SK-N-SH (cell line): ENCODE measurements at regions of chrX and their contacts with region 1.

Region 1: DNA sequence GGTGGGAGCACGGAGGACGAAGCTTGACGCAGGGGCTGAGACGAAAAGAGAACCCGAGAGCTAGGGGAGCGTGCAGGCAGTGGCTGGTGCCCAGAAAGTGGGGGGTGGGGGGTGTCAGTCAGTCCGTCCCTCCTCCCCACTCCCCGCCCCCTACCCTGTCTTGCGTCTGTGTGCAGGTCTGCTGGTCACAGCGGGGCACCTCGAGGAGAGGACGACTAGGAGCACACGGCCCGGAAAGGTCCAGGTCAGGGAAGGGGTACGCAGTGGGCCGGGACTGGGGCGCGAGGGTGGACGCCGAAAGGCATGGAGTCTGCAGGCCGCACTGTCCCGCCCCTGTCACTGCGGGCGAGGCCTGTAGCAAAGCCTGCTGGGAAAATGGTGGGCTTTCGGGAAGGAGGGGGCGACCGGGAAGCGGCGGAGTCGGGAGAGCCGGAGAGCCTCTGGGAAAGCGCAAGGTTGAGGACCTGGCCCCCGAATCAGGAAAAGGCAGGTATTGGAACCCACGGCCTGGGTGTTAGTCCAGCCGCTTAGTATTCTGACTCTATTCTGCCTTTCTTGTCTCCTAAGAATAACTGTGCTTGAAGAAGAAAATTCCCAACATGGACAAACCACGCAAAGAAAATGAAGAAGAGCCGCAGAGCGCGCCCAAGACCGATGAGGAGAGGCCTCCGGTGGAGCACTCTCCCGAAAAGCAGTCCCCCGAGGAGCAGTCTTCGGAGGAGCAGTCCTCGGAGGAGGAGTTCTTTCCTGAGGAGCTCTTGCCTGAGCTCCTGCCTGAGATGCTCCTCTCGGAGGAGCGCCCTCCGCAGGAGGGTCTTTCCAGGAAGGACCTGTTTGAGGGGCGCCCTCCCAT is 769 bp downstream of the TCEAL1 start:
- DNase-seq: peak; percentile 70
- H3K4me3 ChIP-seq: peak overlapping the region; percentile 62 to 67
- H3K27ac ChIP-seq: peak overlapping the region; percentile 86 to 92
- H3K4me1 ChIP-seq: peaks cover 3 to 4% of the 10 kb centered on the region in 2 experiments; a peak in 3 of 4 replicates
- H3K27me3 ChIP-seq: no peaks in the 10 kb centered on the region; the same call in 1 of the 2 replicates
- CTCF ChIP-seq: peak; percentile 65
- EP300 ChIP-seq: no peak
- RAD21 ChIP-seq: peak; percentile 47

Region 2: GRCh38 chrX:102745857-102746584 is 883.5 kb before region 1 on chrX:
- CTCF ChIA-PET with region 1: no interaction called
- POLR2A ChIA-PET with region 1: no interaction called
- DNase-seq: peak; percentile 75
- H3K4me3 ChIP-seq: peak overlapping the region; percentile 41 to 61
- H3K27ac ChIP-seq: peak overlapping the region in 1 of 2 experiments; percentile 58; a peak in 2 of 4 replicates
- H3K4me1 ChIP-seq: no peaks in the 10 kb centered on the region; a peak in 1 of 4 replicates
- H3K27me3 ChIP-seq: no peaks in the 10 kb centered on the region
- CTCF ChIP-seq: no peak
- EP300 ChIP-seq: no peak
- RAD21 ChIP-seq: no peak

Region 3: DNA sequence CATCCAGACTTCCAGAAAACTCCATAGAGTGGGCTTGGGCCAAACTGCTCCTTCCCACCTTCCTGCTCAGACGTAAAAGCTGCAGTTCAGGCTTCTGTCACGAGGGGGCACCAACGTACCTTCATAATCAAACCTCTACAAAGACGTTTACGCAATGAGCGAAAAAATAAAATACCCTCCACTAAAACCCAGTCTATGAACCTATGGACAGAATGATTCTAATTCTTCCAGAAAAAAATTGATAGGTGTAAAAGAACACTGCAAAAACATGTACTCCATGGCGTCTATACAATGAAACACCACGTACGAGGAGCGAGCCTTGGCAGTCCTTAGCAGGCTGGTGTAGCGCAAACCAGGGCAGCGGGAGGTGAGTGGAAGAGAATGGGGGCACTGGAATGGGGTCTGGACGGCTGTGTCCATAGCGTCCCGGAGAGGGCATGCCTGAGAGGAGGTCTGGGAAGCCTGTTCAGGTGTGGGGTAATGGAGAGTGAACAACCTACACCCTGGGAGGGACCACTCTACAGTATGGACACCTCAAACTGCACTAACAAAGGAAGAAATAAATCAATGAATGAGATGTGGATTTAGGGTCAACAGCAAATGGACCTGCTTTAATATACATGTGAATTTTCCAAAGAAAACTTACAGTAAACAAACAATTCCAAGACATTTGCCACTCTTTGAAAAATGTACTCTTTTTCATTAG is 95.9 kb before region 1 on chrX:
- CTCF ChIA-PET with region 1: interaction called, 13 read pairs
- POLR2A ChIA-PET with region 1: no interaction called
- DNase-seq: peak; percentile 25
- H3K4me3 ChIP-seq: peak overlapping the region in 1 of 2 experiments; percentile 31; a peak in 1 of 4 replicates
- H3K27ac ChIP-seq: peak overlapping the region in 1 of 2 experiments; percentile 53; a peak in 1 of 4 replicates
- H3K4me1 ChIP-seq: peaks cover 0 to 7% of the 10 kb centered on the region in 2 experiments; a peak in 1 of 4 replicates
- H3K27me3 ChIP-seq: no peaks in the 10 kb centered on the region
- CTCF ChIP-seq: peak; percentile 92
- EP300 ChIP-seq: no peak
- RAD21 ChIP-seq: peak; percentile 88

Region 4: GRCh38 chrX:103565752-103566151 is 63.8 kb before region 1 on chrX:
- CTCF ChIA-PET with region 1: no interaction called
- POLR2A ChIA-PET with region 1: no interaction called
- DNase-seq: no peak
- H3K4me3 ChIP-seq: no peak overlapping the region
- H3K27ac ChIP-seq: no peak overlapping the region
- H3K4me1 ChIP-seq: no peaks in the 10 kb centered on the region
- H3K27me3 ChIP-seq: no peaks in the 10 kb centered on the region; the same call in 1 of the 2 replicates
- CTCF ChIP-seq: no peak
- EP300 ChIP-seq: no peak
- RAD21 ChIP-seq: no peak

Region 5: DNA sequence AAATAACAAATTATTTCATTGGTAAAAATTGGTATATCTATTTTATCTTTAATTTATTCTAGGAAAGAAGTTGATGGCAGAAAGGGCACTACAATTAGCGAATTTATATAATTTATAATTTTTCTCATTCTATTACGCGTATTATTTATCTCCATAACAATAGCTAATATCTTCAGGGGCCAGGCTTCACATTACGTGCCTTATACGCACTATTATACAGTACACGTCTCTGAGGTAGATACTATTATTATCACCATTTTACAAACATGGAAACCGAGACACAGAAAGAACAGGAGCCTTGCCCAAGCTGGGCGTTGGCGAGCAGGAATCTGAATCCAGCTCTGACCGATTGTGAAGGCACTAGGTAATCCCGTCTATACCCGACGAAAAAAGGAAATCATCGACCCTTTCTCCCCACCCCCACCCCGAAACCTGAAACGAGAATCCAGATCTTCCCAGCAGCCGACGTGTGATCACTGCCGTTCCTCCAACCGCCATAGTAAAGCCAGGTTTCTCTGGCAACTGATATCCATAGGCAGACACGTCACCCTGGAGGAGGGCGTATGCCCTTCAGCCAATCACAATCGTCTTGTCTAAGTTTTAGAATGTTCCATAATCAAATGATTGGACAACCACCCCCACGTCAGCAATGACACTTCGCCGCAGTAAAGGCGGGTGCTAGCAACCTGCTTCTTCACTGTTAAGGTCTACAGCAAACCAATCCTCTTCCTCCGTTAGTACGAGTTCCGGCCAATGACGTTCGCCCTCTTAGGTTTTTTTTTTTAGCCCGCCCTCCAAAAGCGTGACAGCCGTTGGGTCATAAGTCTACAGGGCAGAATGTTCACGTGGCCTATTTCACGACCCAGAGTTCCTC is 56.9 kb after region 1 on chrX and contains the start of gene MORF4L2:
- CTCF ChIA-PET with region 1: interaction called, 12 read pairs
- POLR2A ChIA-PET with region 1: interaction called, 7 read pairs
- DNase-seq: peak; percentile 62
- H3K4me3 ChIP-seq: peak within 1 kb of the TSS; percentile 73 to 87
- H3K27ac ChIP-seq: peak within 1 kb of the TSS; percentile 92 to 94
- H3K4me1 ChIP-seq: peaks cover 4 to 5% of the 10 kb centered on the region in 2 experiments; a peak in 3 of 4 replicates
- H3K27me3 ChIP-seq: no peaks in the 10 kb centered on the region
- CTCF ChIP-seq: no peak
- EP300 ChIP-seq: 0 out of 4 replicates have a peak, but pooled peaks of 1 of the 2 experiments have one; percentile 28
- RAD21 ChIP-seq: no peak
- polyA plus RNA-seq, gene MORF4L2: 221 and 363 TPM in 2 replicates